Activated CD4-positive, alpha-beta T cell treated with anti-CD3 and anti-CD28 coated beads, Interleukin-2, amount 10 ng/mL, durations not matched to agents 24 days and 14 days (primary cell): ENCODE measurements at regions of chr9 and their contacts with region 1.

Region 1: GRCh38 chr9:14353222-14354056 is 39.5 kb upstream of the NFIB start:
- DNase-seq: peak; percentile 93
- H3K4me3 Mint-ChIP-seq: no peak overlapping the region
- H3K27ac Mint-ChIP-seq: no peak overlapping the region
- H3K4me1 Mint-ChIP-seq: peaks cover 5% of the 10 kb centered on the region
- H3K27me3 Mint-ChIP-seq: peaks cover 43% of the 10 kb centered on the region

Region 2: GRCh38 chr9:14314929-14315645 is 38.4 kb before region 1 on chr9:
- intact Hi-C with region 1: loop called (anchors 1 kb)
- DNase-seq: peak; percentile 69
- H3K4me3 Mint-ChIP-seq: peak overlapping the region; percentile 81
- H3K27ac Mint-ChIP-seq: no peak overlapping the region
- H3K4me1 Mint-ChIP-seq: peaks cover 15% of the 10 kb centered on the region
- H3K27me3 Mint-ChIP-seq: peaks cover 65% of the 10 kb centered on the region